Pancreas (tissue), 10 donors: ENCODE measurements at regions of chr5 and their contacts with region 1.

Region 1: DNA sequence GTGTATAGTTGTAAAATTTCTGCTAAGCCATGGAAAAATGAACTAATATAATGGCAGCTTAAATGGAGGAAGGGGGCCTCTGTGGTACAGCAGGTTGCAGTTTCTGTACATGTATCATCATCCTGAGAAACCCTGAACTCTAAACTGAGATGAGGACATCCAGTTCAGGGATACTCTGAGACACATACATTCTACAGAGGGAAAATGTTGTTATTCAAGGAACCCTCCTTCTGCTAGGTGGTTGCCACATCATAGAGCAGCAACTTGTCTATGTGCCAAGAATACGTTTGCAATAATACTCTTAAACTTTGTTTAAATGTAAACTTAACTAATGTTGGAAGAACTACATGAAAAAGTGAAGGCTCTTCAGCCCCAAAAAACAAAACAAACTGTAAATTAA is 1310.8 kb upstream of the WWC1 start:
- DNase-seq: no peak
- ATAC-seq: no peak
- H3K4me3 ChIP-seq: no peak overlapping the region
- H3K27ac ChIP-seq: peak overlapping the region in 1 of 4 donors; percentile 73
- H3K4me1 ChIP-seq: peaks cover 0 to 47% (median 31%) of the 10 kb centered on the region in 3 donors
- H3K27me3 ChIP-seq: no peaks in the 10 kb centered on the region
- CTCF ChIP-seq: no peak

Region 2: GRCh38 chr5:167049043-167049663 is 68.5 kb after region 1 on chr5:
- intact Hi-C with region 1: loop called in 1 of 3 experiments (anchors 10 kb)
- DNase-seq: peak in 4 of 6 donors; percentile 21 to 62 (median 38)
- ATAC-seq: peak; percentile 83 to 97 (median 93)
- H3K4me3 ChIP-seq: no peak overlapping the region
- H3K27ac ChIP-seq: no peak overlapping the region
- H3K4me1 ChIP-seq: peaks cover 0 to 15% (median 5%) of the 10 kb centered on the region in 3 donors
- H3K27me3 ChIP-seq: no peaks in the 10 kb centered on the region
- CTCF ChIP-seq: peak in 3 of 4 donors; percentile 47 to 51 (median 48)

Region 3: DNA sequence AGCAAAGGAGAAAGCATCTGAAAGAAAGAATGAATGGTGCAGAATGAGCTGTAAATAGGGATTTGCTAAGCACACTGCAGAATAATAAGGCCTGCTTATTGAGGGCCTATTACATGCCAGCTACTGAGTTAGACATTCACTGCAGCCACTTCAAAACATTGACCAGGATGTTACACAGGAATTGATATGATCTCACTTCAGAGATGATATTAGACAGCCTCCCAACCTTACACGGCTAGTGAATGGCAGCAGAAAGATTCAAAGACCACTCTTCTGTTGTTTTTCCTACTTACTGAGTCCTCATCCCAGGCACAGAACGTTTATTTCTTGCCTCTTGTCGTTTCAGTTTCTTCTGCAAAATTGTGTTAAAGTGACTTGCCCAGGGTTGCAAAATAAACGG is 100.9 kb after region 1 on chr5:
- intact Hi-C with region 1: no loop called
- DNase-seq: no peak
- ATAC-seq: no peak
- H3K4me3 ChIP-seq: no peak overlapping the region
- H3K27ac ChIP-seq: no peak overlapping the region
- H3K4me1 ChIP-seq: no peaks in the 10 kb centered on the region
- H3K27me3 ChIP-seq: no peaks in the 10 kb centered on the region
- CTCF ChIP-seq: no peak

Region 4: DNA sequence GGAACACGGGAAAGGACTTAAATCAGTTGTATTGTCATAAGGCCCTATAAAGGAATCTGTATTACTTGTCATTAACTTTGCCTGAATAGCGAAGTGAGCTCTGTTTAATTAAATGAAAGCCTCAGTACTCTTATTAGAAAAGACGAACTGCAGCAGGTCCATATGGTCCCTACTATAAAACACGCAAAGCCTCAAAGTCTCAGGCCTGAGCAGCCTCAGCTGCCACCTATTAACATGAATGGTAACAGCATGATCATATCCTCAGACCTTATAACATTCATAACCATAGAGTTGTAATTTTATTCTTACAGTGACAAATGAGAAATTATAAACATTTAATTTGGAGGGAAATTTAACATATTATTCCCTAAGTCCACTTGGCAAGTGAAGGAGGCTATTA is 197.1 kb after region 1 on chr5:
- intact Hi-C with region 1: no loop called
- DNase-seq: no peak
- ATAC-seq: no peak
- H3K4me3 ChIP-seq: no peak overlapping the region
- H3K27ac ChIP-seq: no peak overlapping the region
- H3K4me1 ChIP-seq: no peaks in the 10 kb centered on the region
- H3K27me3 ChIP-seq: no peaks in the 10 kb centered on the region
- CTCF ChIP-seq: no peak

Region 5: GRCh38 chr5:167945542-167946384 is 965.1 kb after region 1 on chr5:
- intact Hi-C with region 1: no loop called
- DNase-seq: no peak
- ATAC-seq: peak in 1 of 4 donors; percentile 26
- H3K4me3 ChIP-seq: no peak overlapping the region
- H3K27ac ChIP-seq: no peak overlapping the region
- H3K4me1 ChIP-seq: no peaks in the 10 kb centered on the region
- H3K27me3 ChIP-seq: no peaks in the 10 kb centered on the region
- CTCF ChIP-seq: no peak